ENCODE measurements at regions of chr18 and their contacts with region 1.

Region 1: GRCh38 chr18:23918401-23919032 is 96.0 kb upstream of the TTC39C start:
- DNase-seq: peak; percentile 89
- ATAC-seq: peak; percentile 90
- H3K4me3 Mint-ChIP-seq: no peak overlapping the region
- H3K27ac Mint-ChIP-seq: no peak overlapping the region
- H3K4me1 Mint-ChIP-seq: peaks cover 36% of the 10 kb centered on the region
- H3K27me3 Mint-ChIP-seq: peaks cover 17% of the 10 kb centered on the region

Region 2: DNA sequence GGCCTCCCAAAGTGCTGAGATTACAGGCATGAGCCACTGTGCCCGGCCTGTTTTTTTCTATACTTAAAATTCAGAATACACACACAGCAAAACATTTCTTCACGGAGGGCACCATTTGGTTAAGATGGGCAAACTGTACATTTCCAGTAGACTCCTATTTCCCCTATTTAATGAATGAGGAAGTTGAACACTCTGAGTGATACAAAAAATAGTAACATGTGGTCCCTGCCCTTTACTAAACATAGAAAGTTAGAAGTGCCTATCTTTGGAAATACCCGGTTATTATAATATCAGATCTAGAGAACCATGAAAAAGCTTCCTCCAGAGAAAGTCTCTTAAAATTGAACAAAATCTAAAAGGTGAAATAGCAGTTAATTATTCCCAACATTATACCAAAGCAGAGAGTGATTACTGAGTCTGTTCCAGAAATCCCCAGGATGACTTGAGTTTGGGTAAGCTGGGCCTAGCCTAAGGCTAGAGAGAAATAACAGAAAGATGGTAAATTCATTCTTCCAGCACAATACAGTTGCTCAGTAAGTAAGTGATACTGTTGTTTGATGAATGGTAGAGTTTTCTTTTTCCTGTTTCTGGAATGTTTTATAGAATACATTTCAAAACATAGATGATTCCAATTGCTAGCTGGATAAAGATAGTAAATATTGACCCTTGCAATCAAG is 438.6 kb before region 1 on chr18:
- CTCF ChIA-PET with region 1: no interaction called
- POLR2A ChIA-PET with region 1: no interaction called
- DNase-seq: no peak
- ATAC-seq: no peak
- H3K4me3 Mint-ChIP-seq: no peak overlapping the region
- H3K27ac Mint-ChIP-seq: no peak overlapping the region
- H3K4me1 Mint-ChIP-seq: no peaks in the 10 kb centered on the region
- H3K27me3 Mint-ChIP-seq: no peaks in the 10 kb centered on the region

Region 3: DNA sequence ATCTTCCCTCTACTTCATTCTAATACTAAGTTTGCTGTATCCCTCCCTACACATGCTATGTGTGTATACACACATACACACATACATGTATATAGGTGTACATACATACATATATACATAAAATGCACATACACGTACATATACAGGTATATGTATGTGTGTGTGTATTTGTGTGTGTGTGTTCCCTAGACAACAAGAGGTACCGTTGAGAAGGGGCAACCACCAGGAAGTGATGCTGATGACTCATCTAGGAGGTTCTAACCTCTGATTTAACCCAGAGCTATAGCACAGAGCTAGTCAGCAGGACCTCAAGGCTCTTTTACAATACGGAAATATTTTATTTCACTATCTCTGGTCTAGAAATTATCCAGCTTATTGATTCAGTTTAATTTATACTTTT is 90.1 kb before region 1 on chr18:
- CTCF ChIA-PET with region 1: interaction called, 37 read pairs
- POLR2A ChIA-PET with region 1: interaction called, 5 read pairs
- DNase-seq: peak; percentile 80
- ATAC-seq: peak; percentile 98
- H3K4me3 Mint-ChIP-seq: no peak overlapping the region
- H3K27ac Mint-ChIP-seq: peak overlapping the region; percentile 47
- H3K4me1 Mint-ChIP-seq: peaks cover 44% of the 10 kb centered on the region
- H3K27me3 Mint-ChIP-seq: peaks cover under 1% of the 10 kb centered on the region

Region 4: GRCh38 chr18:23883277-23883790 is 35.2 kb before region 1 on chr18:
- CTCF ChIA-PET with region 1: interaction called, 14 read pairs
- POLR2A ChIA-PET with region 1: no interaction called
- DNase-seq: no peak
- ATAC-seq: no peak
- H3K4me3 Mint-ChIP-seq: no peak overlapping the region
- H3K27ac Mint-ChIP-seq: no peak overlapping the region
- H3K4me1 Mint-ChIP-seq: peaks cover 30% of the 10 kb centered on the region
- H3K27me3 Mint-ChIP-seq: peaks cover 2% of the 10 kb centered on the region

Region 5: GRCh38 chr18:23934252-23934651 is 15.7 kb after region 1 on chr18:
- CTCF ChIA-PET with region 1: interaction called, 53 read pairs
- POLR2A ChIA-PET with region 1: no interaction called
- DNase-seq: no peak
- ATAC-seq: peak; percentile 10
- H3K4me3 Mint-ChIP-seq: no peak overlapping the region
- H3K27ac Mint-ChIP-seq: peak overlapping the region; percentile 48
- H3K4me1 Mint-ChIP-seq: peaks cover 72% of the 10 kb centered on the region
- H3K27me3 Mint-ChIP-seq: no peaks in the 10 kb centered on the region

Region 6: GRCh38 chr18:24014062-24014985 is 95.8 kb after region 1 on chr18 and contains the start of gene TTC39C:
- CTCF ChIA-PET with region 1: interaction called, 11 read pairs
- POLR2A ChIA-PET with region 1: no interaction called
- DNase-seq: peak; percentile 89
- ATAC-seq: peak; percentile 73
- H3K4me3 Mint-ChIP-seq: peak within 1 kb of the TSS; percentile 95
- H3K27ac Mint-ChIP-seq: peak within 1 kb of the TSS; percentile 91
- H3K4me1 Mint-ChIP-seq: peaks cover 75% of the 10 kb centered on the region
- H3K27me3 Mint-ChIP-seq: no peaks in the 10 kb centered on the region
- total RNA-seq, gene TTC39C: 71.5 to 72.2 TPM

Measured in activated CD8-positive, alpha-beta T cell treated with anti-CD3 and anti-CD28 coated beads, Interleukin-2, amount 10 ng/mL, durations not matched to agents 7 days and 5 days (primary cell).